ENCODE measurements at regions of chr19 and their contacts with region 1.

Region 1: GRCh38 chr19:50357178-50358100 is 8.0 kb downstream of the NAPSA start:
- DNase-seq: peak; percentile 90
- H3K4me3 ChIP-seq: peak overlapping the region; percentile 27 to 55 (median 44)
- H3K27ac ChIP-seq: peak overlapping the region; percentile 77 to 84 (median 80)
- H3K4me1 ChIP-seq: peaks cover 0 to 15% (median 10%) of the 10 kb centered on the region in 4 donors
- H3K27me3 ChIP-seq: no peaks in the 10 kb centered on the region
- CTCF ChIP-seq: peak; percentile 74 to 93 (median 82)
- EP300 ChIP-seq: no peak
- POLR2A ChIP-seq: peak in 1 of 2 donors; percentile 15

Region 2: GRCh38 chr19:50167314-50167721 is 190.1 kb before region 1 on chr19:
- intact Hi-C with region 1: no loop called
- DNase-seq: no peak
- H3K4me3 ChIP-seq: no peak overlapping the region
- H3K27ac ChIP-seq: no peak overlapping the region
- H3K4me1 ChIP-seq: no peaks in the 10 kb centered on the region
- H3K27me3 ChIP-seq: peaks cover 0 to 50% (median 21%) of the 10 kb centered on the region in 3 donors
- CTCF ChIP-seq: no peak
- EP300 ChIP-seq: no peak
- POLR2A ChIP-seq: no peak

Region 3: DNA sequence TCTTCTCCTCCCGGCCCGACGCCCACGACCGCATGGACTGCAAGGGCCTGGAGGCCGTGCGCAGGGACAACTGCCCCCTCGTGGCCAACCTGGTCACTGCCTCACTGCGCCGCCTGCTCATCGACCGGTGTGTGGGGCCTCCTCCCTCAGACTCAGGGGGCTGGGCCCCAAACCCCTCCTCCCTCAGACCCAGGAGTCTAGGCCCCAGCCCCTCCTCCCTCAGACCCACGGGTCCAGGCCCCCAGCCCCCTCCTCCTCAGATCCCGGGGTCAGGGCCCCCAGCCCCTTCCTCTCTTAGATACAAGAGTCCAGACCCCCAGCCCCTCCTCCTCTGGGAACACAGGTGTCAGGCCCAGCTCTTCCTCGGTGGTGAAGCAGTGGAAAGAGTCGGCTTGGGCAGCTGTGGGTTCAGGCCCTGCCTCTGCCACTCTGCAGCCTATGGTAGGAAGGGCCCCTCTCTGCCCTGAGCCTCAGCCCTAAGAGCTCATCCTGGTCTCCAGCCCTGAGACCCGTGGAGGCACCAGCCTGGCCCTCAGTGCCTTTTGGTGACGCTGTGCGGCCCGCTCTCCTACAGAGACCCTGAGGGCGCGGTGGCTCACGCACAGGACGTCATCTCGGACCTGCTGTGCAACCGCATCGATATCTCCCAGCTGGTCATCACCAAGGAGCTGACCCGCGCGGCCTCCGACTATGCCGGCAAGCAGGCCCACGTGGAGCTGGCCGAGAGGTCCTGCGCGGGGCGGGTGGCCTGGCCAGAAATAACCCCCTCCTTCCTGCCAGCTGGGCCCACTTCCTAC is 57.6 kb after region 1 on chr19:
- intact Hi-C with region 1: loop called (anchors 1 kb)
- DNase-seq: peak; percentile 86
- H3K4me3 ChIP-seq: no peak overlapping the region
- H3K27ac ChIP-seq: no peak overlapping the region
- H3K4me1 ChIP-seq: peaks cover 0 to 9% (median 7%) of the 10 kb centered on the region in 4 donors
- H3K27me3 ChIP-seq: peaks cover 17 to 37% (median 31%) of the 10 kb centered on the region in 3 donors
- CTCF ChIP-seq: peak; percentile 66 to 90 (median 71)
- EP300 ChIP-seq: no peak
- POLR2A ChIP-seq: no peak

Region 4: DNA sequence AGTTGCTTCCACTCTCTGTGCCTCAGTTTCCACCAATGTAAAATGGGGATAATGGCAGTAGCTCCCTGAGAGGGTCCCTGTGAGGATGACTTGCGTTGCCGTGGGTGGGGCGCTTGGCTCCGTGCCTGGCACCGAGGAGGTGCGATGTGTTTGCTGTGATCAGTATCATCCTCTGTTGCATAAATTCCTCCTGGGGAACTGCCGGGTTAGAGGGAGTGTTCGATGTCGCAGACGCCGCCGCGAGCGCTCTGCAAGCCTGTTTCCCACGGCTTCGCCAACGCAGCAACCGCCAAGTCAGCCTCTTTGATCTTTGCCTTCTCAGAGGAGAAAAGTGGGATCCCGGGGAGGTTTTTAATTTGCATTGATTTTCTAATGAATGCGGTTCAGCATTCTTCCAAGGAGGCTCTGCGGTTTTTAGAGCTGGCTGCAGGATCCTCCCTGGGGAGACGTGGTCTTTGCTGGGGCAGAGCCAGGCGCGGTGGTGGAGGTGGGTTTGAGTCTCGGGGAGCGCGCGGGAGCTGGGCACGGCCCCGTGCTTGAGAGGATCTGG is 420.4 kb after region 1 on chr19:
- intact Hi-C with region 1: loop called (anchors 5 kb)
- DNase-seq: no peak
- H3K4me3 ChIP-seq: no peak overlapping the region
- H3K27ac ChIP-seq: no peak overlapping the region
- H3K4me1 ChIP-seq: no peaks in the 10 kb centered on the region
- H3K27me3 ChIP-seq: peaks cover 20 to 95% (median 70%) of the 10 kb centered on the region in 3 donors
- CTCF ChIP-seq: no peak
- EP300 ChIP-seq: no peak
- POLR2A ChIP-seq: no peak

Region 5: DNA sequence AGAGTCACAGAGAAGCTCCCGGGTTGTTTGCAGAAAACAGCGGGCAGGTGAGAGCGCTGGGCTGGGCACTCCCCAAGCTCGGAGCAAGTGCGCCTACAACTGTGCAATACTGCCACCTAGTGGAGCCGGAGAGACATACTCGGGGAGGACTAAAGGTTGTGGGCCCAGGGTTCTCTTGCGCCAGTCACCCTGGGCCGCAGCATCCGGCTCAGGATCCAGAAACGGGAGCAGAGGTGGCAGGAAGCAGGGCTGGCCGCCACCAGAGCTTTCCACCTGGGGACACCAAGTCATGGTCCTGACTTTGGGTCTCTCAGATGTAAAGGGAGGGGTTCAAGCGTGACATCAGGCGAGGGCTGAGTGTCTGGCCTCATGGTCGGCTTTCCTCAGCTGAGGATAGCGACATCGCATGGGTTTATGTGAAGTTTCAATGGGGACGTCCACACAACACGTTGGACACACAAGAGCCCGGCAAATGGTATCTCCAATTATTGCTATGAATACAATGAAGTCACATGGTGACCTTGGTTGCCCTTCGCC is 564.9 kb after region 1 on chr19:
- intact Hi-C with region 1: loop called (anchors 10 kb)
- DNase-seq: peak; percentile 80
- H3K4me3 ChIP-seq: no peak overlapping the region
- H3K27ac ChIP-seq: no peak overlapping the region
- H3K4me1 ChIP-seq: peaks cover 0 to 5% (median 0%) of the 10 kb centered on the region in 4 donors
- H3K27me3 ChIP-seq: peaks cover 0 to 39% (median 9%) of the 10 kb centered on the region in 3 donors
- CTCF ChIP-seq: peak; percentile 27 to 78 (median 63)
- EP300 ChIP-seq: no peak
- POLR2A ChIP-seq: no peak

Measured in sigmoid colon (tissue), 7 donors.